Left ventricle myocardium superior (tissue), 1 donor: ENCODE measurements at regions of chr11 and their contacts with region 1.

Region 1: GRCh38 chr11:60775420-60775961 is 9.6 kb upstream of the MS4A10 start:
- DNase-seq: peak; percentile 70
- ATAC-seq: peak; percentile 92

Region 2: DNA sequence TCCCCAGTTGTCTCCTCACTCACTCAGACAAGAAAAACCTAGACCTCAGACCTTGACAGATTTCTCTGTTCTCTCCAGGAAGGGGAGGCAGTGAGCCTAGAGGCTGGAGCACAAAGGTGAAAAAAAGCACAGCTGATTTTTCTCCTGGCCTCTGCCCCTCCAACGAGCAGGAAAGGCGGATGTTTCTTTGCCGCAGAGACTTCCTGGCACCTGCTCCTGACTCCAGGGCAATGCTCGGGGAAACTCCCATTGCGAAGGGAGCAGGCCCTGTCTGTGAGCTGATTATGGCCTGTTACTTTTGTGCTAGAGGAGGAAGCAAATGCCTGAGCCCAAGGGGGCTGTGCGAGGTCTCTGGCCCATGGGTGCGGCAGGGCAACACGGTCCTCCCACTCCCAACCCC is 35.1 kb after region 1 on chr11:
- intact Hi-C with region 1: no loop called
- DNase-seq: peak; percentile 10
- ATAC-seq: no peak

Region 3: GRCh38 chr11:61187505-61188130 is 412.1 kb after region 1 on chr11:
- intact Hi-C with region 1: loop called (anchors 5 kb)
- DNase-seq: peak; percentile 76
- ATAC-seq: peak; percentile 66